Naive thymus-derived CD4-positive, alpha-beta T cell (primary cell): ENCODE measurements at regions of chr10 and their contacts with region 1.

Region 1: DNA sequence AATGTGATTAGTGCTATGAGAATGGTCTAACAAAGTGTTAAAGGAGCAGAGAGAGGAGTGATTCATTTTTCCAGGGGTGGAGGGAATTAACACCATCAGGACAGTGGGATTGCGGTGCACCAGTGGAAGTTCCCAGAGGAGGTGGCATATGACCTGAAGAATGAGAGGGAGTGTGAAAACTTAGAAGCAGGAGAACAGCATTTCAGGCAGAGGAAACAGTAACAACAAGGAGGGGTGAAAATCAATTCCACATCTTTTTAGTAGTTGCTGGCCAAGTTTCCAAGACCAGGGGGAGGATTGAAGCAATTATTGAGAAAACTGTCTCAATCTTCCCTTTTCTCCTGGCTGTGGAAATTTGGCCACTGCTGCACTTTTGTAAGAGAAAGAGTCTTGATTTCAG is 23.7 kb upstream of the CCDC172 start:
- DNase-seq: no peak
- ATAC-seq: no peak
- H3K4me3 ChIP-seq: no peak overlapping the region
- H3K4me3 Mint-ChIP-seq: no peak overlapping the region
- H3K27ac ChIP-seq: no peak overlapping the region
- H3K27ac Mint-ChIP-seq: no peak overlapping the region
- H3K4me1 ChIP-seq: no peaks in the 10 kb centered on the region
- H3K4me1 Mint-ChIP-seq: peaks cover 0 to 5% (median 0%) of the 10 kb centered on the region in 7 donors
- H3K27me3 ChIP-seq: no peaks in the 10 kb centered on the region
- H3K27me3 Mint-ChIP-seq: peaks cover 0 to 17% (median 11%) of the 10 kb centered on the region in 5 donors

Region 2: DNA sequence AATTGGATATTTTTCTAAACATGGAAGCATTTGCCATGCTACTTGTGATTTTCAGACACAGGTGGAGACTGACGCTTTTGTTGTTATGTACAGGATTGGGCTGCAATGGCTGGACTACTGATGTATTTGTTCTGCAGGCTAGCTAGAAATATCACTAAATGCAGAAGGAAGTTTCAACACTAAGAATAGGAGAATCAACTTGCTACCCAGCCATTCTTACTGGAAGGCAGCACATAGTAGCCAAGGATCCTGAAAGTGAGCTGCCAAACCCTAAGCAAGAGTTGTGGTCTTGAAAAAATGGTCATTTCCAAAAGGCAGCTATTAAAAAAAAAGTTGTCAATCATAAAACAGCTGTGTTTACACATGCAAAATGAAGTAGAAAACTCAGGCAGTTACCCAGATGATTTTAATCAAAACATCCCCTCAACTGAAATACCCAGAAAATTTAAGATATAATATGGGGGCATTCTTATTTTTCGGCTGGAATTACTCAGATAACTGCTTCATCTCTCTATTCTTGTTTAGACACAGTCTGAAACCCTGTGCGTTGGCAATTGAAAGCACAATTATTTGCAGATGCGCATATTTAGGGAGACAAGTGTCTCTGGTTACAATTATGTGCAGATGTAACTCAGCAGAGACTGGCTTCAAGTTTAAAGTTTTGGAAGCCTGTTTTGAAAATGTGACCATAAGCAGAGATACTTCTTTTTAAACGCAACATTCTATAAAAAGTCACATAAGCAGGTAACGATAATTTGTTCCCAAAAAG is 58.7 kb before region 1 on chr10:
- CTCF ChIA-PET with region 1: no interaction called
- POLR2A ChIA-PET with region 1: no interaction called
- intact Hi-C with region 1: loop called in 1 of 2 experiments (anchors 10 kb)
- DNase-seq: no peak
- ATAC-seq: no peak
- H3K4me3 ChIP-seq: no peak overlapping the region
- H3K4me3 Mint-ChIP-seq: no peak overlapping the region
- H3K27ac ChIP-seq: no peak overlapping the region
- H3K27ac Mint-ChIP-seq: no peak overlapping the region
- H3K4me1 ChIP-seq: no peaks in the 10 kb centered on the region
- H3K4me1 Mint-ChIP-seq: no peaks in the 10 kb centered on the region
- H3K27me3 ChIP-seq: no peaks in the 10 kb centered on the region
- H3K27me3 Mint-ChIP-seq: peaks cover 0 to 7% (median 0%) of the 10 kb centered on the region in 5 donors

Region 3: DNA sequence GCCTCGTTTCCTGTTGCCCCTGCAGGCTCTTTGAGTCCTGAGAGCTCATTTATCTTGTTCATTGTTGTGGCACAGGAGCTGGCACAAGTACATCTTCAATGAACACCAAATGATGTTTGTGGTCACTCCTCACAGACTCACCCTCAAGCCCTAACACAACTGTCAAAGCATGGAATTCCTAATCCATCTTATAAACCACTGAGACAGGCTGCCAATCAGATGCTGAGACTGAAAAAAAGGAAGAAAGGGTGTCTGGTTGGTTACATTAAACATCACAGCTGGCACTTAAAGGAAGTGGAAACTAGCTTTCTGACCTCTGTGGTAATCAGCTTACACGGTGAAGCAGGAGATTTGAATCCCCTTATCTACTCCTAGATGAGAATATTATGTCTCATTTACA is 16.0 kb after region 1 on chr10:
- CTCF ChIA-PET with region 1: no interaction called
- POLR2A ChIA-PET with region 1: no interaction called
- intact Hi-C with region 1: no loop called
- DNase-seq: no peak
- ATAC-seq: no peak
- H3K4me3 ChIP-seq: no peak overlapping the region
- H3K4me3 Mint-ChIP-seq: no peak overlapping the region
- H3K27ac ChIP-seq: no peak overlapping the region
- H3K27ac Mint-ChIP-seq: no peak overlapping the region
- H3K4me1 ChIP-seq: no peaks in the 10 kb centered on the region
- H3K4me1 Mint-ChIP-seq: peaks cover 0 to 7% (median 0%) of the 10 kb centered on the region in 7 donors
- H3K27me3 ChIP-seq: no peaks in the 10 kb centered on the region
- H3K27me3 Mint-ChIP-seq: no peaks in the 10 kb centered on the region